Ascending aorta (tissue), 2 donors: ENCODE measurements at regions of chr3 and their contacts with region 1.

Region 1: GRCh38 chr3:146189519-146190173 is 28.7 kb upstream of the PLOD2 start:
- DNase-seq: no peak
- H3K4me3 ChIP-seq: no peak overlapping the region
- H3K27ac ChIP-seq: no peak overlapping the region
- H3K4me1 ChIP-seq: no peaks in the 10 kb centered on the region
- H3K27me3 ChIP-seq: no peaks in the 10 kb centered on the region
- CTCF ChIP-seq: peak; percentile 54 to 77 (median 76)

Region 2: DNA sequence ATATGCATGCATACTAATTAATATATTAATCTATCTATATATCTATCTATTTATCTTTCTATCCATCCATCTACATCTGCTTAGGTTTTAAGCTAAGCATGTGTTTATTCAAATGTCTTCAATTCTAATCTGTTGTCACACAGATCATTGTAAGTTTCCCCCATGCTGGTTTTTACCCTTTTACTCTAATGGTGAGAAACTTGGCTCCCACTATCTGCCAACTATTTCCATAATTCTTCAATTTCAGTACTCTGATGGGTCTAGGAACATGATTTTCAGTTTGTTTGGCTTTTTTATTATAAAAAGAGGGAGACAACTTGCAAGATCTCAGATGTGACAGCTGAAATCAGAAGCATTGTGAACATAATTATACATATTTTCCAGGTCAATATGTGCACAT is 802.4 kb before region 1 on chr3:
- intact Hi-C with region 1: no loop called
- DNase-seq: no peak
- H3K4me3 ChIP-seq: no peak overlapping the region
- H3K27ac ChIP-seq: no peak overlapping the region
- H3K4me1 ChIP-seq: no peaks in the 10 kb centered on the region
- H3K27me3 ChIP-seq: no peaks in the 10 kb centered on the region
- CTCF ChIP-seq: no peak

Region 3: DNA sequence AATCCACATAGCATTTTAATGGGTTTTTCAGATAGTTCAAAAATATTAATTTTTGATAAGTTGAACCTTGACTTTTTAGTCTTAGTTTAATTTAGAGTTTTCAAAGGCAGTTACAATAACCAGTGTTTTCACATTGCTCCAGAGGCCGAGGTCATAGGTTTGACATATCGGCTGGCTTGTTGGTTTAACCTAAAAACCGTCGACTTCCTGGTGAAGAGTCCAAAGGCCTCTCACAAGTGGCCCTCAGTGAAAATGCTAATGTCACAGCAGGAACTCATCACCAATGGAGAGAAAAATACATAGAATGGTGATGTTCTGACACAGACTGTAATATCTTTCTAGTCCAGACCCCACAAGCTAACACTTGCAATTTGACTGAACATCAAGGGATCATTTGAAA is 671.0 kb before region 1 on chr3:
- intact Hi-C with region 1: no loop called
- DNase-seq: no peak
- H3K4me3 ChIP-seq: no peak overlapping the region
- H3K27ac ChIP-seq: no peak overlapping the region
- H3K4me1 ChIP-seq: no peaks in the 10 kb centered on the region
- H3K27me3 ChIP-seq: no peaks in the 10 kb centered on the region
- CTCF ChIP-seq: no peak

Region 4: DNA sequence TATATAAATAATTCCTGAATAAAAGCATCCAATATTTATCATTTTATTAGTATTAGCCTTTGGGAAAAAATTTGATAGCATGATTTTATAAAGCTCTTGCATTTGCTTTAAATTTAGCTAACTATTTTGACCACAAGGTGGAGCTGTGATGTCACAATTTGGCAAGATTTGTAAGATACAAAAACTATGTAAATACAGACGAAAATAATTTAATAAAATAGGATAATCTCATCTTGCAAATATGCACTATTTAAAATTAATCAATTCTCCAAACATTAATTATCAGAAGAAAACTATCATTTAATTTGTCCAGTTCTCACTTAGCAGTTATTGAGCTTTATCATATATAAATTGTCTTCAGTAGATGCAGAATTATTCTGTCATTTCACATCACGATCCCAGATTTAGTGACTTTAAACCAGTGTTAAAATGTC is 124.1 kb before region 1 on chr3:
- intact Hi-C with region 1: loop called (anchors 1 kb)
- DNase-seq: no peak
- H3K4me3 ChIP-seq: no peak overlapping the region
- H3K27ac ChIP-seq: no peak overlapping the region
- H3K4me1 ChIP-seq: no peaks in the 10 kb centered on the region
- H3K27me3 ChIP-seq: no peaks in the 10 kb centered on the region
- CTCF ChIP-seq: peak; percentile 43 to 73 (median 60)

Region 5: GRCh38 chr3:146152834-146153233 is 36.8 kb before region 1 on chr3:
- intact Hi-C with region 1: loop called (anchors 5 kb)
- DNase-seq: peak in 1 of 2 donors; percentile 71
- H3K4me3 ChIP-seq: peak overlapping the region; percentile 1 to 49
- H3K27ac ChIP-seq: peak overlapping the region; percentile 67 to 79
- H3K4me1 ChIP-seq: peaks cover 7 to 32% of the 10 kb centered on the region in 2 donors
- H3K27me3 ChIP-seq: no peaks in the 10 kb centered on the region
- CTCF ChIP-seq: no peak

Region 6: GRCh38 chr3:146227486-146227885 is 37.8 kb after region 1 on chr3:
- intact Hi-C with region 1: no loop called
- DNase-seq: no peak
- H3K4me3 ChIP-seq: no peak overlapping the region
- H3K27ac ChIP-seq: no peak overlapping the region
- H3K4me1 ChIP-seq: peaks cover 0 to 4% of the 10 kb centered on the region in 2 donors
- H3K27me3 ChIP-seq: no peaks in the 10 kb centered on the region
- CTCF ChIP-seq: no peak

Region 7: DNA sequence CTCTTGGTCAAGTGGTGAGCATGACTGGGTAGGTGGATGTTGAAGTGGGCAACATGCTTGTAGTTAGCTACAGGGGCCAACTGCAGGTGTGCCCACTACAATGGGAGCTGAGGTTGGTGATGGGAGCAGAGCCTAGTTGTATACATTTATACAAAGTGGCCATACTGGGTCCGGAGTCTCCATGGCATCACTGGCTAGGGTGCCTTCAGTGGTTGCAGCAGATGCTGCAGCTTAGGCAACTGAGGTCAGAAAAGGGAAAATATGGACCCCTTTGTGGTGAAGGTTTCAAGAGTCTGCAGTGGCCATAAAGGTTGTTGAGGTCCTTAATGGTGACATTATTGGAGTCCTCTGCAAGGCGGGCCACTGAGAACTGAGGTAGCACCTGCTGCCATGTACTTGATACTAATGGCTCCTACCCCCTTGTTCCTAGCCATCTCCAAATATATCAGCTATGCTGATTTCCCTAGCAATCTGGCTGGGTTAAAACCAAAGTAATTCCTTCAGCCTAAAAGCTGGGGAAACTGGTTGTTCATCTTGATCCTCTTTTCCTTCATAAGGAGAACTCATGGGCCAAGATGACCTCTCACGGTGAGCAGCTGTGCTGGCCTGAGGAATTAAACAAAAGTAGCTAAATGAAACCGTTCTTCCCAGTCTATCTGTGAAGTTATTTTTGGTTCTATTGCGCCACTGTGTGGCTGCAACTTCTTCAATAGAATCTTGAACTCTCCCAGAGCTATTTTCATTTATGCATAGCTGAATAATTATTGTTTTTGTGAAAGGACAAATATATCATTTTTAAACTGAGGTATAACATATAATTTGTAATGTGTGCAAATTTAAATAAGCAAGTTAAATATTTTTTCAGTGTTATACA is 137.3 kb after region 1 on chr3:
- intact Hi-C with region 1: loop called (anchors 1 kb)
- DNase-seq: peak in 1 of 2 donors; percentile 74
- H3K4me3 ChIP-seq: no peak overlapping the region
- H3K27ac ChIP-seq: no peak overlapping the region
- H3K4me1 ChIP-seq: peaks cover 0 to 6% of the 10 kb centered on the region in 2 donors
- H3K27me3 ChIP-seq: no peaks in the 10 kb centered on the region
- CTCF ChIP-seq: peak; percentile 60 to 68 (median 66)